GM13977 (cell line): ENCODE measurements at regions of chr4 and their contacts with region 1.

Region 1: GRCh38 chr4:47463235-47463956 is at the start of gene COMMD8:
- DNase-seq: peak; percentile 92
- CTCF ChIP-seq: peak; percentile 22

Region 2: DNA sequence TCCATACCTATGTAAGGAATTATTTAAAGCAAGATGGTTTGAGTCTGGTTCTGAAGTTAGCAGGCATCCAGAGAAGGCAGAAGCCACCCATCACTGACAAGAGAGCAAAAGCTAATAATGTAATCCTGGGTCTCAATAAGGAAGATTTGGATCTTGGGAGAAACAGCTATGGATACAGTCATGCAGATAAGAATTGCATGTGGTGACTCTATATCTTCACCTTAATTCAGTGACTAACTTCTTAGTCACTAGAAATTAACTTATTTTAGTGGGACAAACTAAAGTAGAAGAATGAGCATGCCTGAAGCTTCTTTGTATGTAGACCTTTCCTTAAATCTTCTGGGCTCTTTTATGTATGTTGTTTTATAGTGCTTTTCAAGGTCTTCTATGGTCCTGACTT is 88.3 kb after region 1 on chr4:
- in situ Hi-C with region 1: loop called (anchors 25 kb)
- DNase-seq: no peak
- CTCF ChIP-seq: no peak

Region 3: GRCh38 chr4:47686294-47686872 is 223.0 kb after region 1 on chr4:
- in situ Hi-C with region 1: no loop called
- DNase-seq: peak; percentile 40
- CTCF ChIP-seq: peak; percentile 77